ENCODE measurements at regions of chr2 and their contacts with region 1.

Region 1: GRCh38 chr2:128232965-128233789 is 85.5 kb downstream of the HS6ST1 start:
- DNase-seq: peak; percentile 46
- ATAC-seq: peak; percentile 99
- H3K4me3 ChIP-seq: no peak overlapping the region
- H3K27ac ChIP-seq: no peak overlapping the region
- H3K4me1 ChIP-seq: peaks cover 3 to 9% of the 10 kb centered on the region in 2 experiments; a peak in 3 of 4 replicates
- H3K27me3 ChIP-seq: no peaks in the 10 kb centered on the region
- CTCF ChIP-seq: peak; percentile 65 to 85 (median 74)
- POLR2A ChIP-seq: no peak
- RAD21 ChIP-seq: peak; percentile 69

Region 2: DNA sequence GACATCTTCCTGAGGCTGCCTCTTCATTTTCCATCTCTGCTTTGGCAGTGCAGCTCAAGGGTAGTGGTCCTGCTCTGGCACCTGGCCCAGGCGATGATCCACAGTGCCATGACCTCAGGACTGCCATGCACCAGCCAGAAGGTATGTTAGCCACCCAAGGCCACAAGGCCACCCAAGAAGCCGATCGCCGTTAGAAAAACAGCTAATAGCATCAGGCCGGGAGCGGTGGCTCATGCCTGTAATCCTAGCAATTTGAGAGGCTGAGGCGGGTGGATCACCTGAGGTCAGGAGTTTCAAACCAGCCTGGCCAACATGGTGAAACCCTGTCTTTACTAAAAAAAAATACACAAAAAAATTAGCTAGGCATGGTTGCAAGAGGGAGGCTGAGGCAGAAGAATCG is 170.6 kb before region 1 on chr2:
- CTCF ChIA-PET with region 1: interaction called, 9 read pairs
- POLR2A ChIA-PET with region 1: no interaction called
- RAD21 ChIA-PET with region 1: no interaction called
- intact Hi-C with region 1: loop called (anchors 1 kb)
- DNase-seq: no peak
- ATAC-seq: no peak
- H3K4me3 ChIP-seq: no peak overlapping the region
- H3K27ac ChIP-seq: no peak overlapping the region
- H3K4me1 ChIP-seq: no peaks in the 10 kb centered on the region
- H3K27me3 ChIP-seq: no peaks in the 10 kb centered on the region
- CTCF ChIP-seq: no peak
- POLR2A ChIP-seq: no peak
- RAD21 ChIP-seq: no peak

Region 3: DNA sequence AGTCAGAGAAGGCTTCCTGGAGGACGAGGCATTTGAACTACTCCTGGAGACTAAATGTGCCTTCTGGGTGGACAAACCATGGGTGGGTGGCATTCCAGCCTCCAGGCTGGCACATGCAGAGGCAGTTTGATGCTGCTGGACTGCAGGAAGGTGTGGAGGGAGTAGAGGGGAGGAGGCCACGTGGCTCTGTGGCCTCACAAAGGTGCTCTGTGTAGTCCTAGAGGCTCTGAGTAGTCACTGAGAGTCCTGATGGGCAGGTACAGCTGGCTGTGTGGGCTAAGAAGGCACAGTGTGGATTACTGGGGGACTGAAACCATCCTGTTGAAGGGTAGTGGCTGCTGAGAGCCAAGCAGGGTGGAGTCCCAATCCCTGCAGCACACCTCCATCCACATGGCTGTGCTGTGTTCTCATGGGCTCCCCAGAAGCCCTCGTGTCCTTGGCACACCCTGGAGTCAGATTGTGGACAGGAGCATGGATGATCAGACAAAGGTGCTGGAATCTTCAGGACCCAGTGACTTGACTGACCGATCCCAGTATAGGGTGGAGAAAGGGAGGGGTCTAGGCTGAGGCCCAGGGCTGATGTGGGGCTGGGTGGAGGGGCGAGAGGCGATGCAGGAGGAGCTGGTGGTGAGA is 172.9 kb after region 1 on chr2:
- CTCF ChIA-PET with region 1: no interaction called
- POLR2A ChIA-PET with region 1: no interaction called
- RAD21 ChIA-PET with region 1: no interaction called
- intact Hi-C with region 1: no loop called
- DNase-seq: no peak
- ATAC-seq: no peak
- H3K4me3 ChIP-seq: no peak overlapping the region
- H3K27ac ChIP-seq: no peak overlapping the region
- H3K4me1 ChIP-seq: no peaks in the 10 kb centered on the region; a peak in 1 of 4 replicates
- H3K27me3 ChIP-seq: no peaks in the 10 kb centered on the region
- CTCF ChIP-seq: no peak
- POLR2A ChIP-seq: no peak
- RAD21 ChIP-seq: no peak

Measured in HCT116 (cell line).